WTC11 (cell line): ENCODE measurements at regions of chr17 and their contacts with region 1.

Region 1: DNA sequence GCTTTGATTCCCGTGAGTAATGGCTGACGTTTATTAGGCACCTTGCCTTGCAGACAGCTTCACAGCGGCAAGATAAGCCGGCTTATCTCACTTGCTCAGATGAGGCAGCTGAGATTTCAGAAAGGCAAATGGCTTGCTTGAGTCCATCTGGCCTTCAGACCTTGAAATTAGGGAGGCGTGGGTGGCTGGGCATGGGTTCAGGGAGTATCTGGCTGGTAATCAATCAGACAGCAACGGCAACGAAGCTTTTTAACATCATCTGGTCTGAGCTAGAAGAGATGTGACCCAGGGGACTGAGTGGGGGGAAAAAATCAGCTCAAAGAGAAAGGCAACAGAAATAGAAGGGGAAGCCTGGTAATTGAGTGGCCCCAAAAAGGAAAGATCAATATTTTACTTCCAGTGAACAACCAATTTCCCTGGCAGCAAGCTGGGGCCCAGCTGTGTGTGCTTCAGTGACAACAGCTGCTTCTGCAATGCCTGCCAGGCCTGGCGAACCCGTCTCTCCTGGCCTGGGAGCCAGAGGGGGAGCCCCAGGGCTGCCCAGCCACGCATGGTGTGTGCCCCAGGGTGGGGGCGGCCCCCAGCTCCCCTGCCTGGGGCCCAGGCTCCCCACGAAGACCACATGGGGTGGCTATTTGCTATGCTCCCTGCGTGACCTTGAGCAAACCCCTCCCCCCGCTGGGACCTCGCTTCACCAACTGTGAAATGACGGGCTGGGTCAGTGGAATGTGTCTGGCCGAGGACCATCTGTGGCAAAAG is 34.0 kb downstream of the RAB11FIP4 start:
- DNase-seq: no peak
- ATAC-seq: peak; percentile 72
- H3K4me3 Mint-ChIP-seq: no peak overlapping the region
- H3K27ac Mint-ChIP-seq: peak overlapping the region; percentile 55
- H3K4me1 Mint-ChIP-seq: peaks cover 12% of the 10 kb centered on the region
- H3K27me3 Mint-ChIP-seq: no peaks in the 10 kb centered on the region; the same call in 1 of the 2 replicates
- CTCF ChIP-seq: no peak

Region 2: GRCh38 chr17:31357831-31358394 is 67.5 kb before region 1 on chr17:
- CTCF ChIA-PET with region 1: no interaction called
- POLR2A ChIA-PET with region 1: no interaction called
- DNase-seq: no peak
- ATAC-seq: no peak
- H3K4me3 Mint-ChIP-seq: no peak overlapping the region
- H3K27ac Mint-ChIP-seq: no peak overlapping the region
- H3K4me1 Mint-ChIP-seq: no peaks in the 10 kb centered on the region
- H3K27me3 Mint-ChIP-seq: no peaks in the 10 kb centered on the region
- CTCF ChIP-seq: no peak

Region 3: GRCh38 chr17:31413874-31414549 is 11.4 kb before region 1 on chr17:
- CTCF ChIA-PET with region 1: interaction called, 15 read pairs
- POLR2A ChIA-PET with region 1: no interaction called
- DNase-seq: no peak
- ATAC-seq: no peak
- H3K4me3 Mint-ChIP-seq: no peak overlapping the region
- H3K27ac Mint-ChIP-seq: no peak overlapping the region
- H3K4me1 Mint-ChIP-seq: peaks cover 21% of the 10 kb centered on the region
- H3K27me3 Mint-ChIP-seq: no peaks in the 10 kb centered on the region; the same call in 1 of the 2 replicates
- CTCF ChIP-seq: no peak